ENCODE measurements at regions of chr2 and their contacts with region 1.

Region 1: GRCh38 chr2:227324995-227325838 is at the start of gene MFF:
- DNase-seq: peak; percentile 97
- H3K4me3 Mint-ChIP-seq: peak within 1 kb of the TSS; percentile 90
- H3K27ac Mint-ChIP-seq: peak within 1 kb of the TSS; percentile 89
- H3K4me1 Mint-ChIP-seq: peaks cover 32% of the 10 kb centered on the region
- H3K27me3 Mint-ChIP-seq: no peaks in the 10 kb centered on the region
- total RNA-seq, gene MFF: 73.2 to 74.1 TPM

Region 2: DNA sequence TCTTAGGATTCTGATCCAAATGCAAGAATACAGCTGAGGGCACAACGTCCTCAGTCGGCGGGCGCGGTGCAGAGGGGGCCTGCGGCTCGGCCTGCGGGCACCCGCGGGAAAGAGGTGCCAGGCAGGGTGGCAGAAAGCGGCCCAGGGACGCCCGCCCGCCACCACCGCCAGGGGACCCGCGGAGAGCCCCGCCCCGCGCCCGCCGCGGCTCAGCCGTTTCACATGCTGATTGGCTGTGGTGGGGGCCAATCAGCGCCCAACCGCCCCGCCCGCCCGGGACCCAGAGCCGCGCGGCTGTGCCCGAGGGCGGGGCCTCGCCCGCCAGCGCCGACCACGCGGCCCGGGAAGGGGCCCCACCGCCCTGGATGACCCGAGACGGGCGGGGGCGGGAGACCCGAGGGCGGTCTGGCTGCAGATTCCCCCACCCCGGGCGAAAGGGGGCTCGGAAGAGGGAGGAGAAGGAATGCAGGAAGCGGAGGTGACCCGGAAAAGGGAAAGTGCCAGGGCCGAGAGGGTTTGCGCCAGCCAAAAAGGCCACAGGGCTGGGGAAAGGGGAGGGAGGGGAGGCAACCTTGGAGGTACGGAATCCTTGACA is 533.6 kb before region 1 on chr2:
- CTCF ChIA-PET with region 1: no interaction called
- POLR2A ChIA-PET with region 1: no interaction called
- intact Hi-C with region 1: loop called (anchors 5 kb)
- DNase-seq: peak; percentile 94
- H3K4me3 Mint-ChIP-seq: peak overlapping the region; percentile 80
- H3K27ac Mint-ChIP-seq: peak overlapping the region; percentile 92
- H3K4me1 Mint-ChIP-seq: peaks cover 29% of the 10 kb centered on the region
- H3K27me3 Mint-ChIP-seq: no peaks in the 10 kb centered on the region

Region 3: DNA sequence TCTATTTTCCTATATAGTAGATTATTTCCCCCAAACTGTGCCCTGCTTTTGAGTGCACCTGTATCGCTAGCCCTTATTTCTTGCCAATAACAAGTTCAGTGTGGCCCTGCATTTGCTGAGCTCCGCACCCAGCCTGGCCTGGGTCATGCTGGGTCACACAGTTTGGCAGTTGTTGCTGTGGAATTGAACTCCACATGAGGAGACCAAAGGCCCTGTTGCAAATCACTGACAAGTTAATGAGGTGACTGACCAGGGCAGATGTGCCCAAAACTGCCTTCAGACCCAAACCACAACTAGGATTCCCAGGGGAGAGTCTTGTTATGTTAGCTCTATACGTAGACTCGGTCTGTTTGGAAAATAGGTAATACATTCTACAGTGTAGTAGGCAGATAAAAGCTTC is 192.2 kb before region 1 on chr2:
- CTCF ChIA-PET with region 1: no interaction called
- POLR2A ChIA-PET with region 1: no interaction called
- intact Hi-C with region 1: loop called (anchors 5 kb)
- DNase-seq: no peak
- H3K4me3 Mint-ChIP-seq: no peak overlapping the region
- H3K27ac Mint-ChIP-seq: no peak overlapping the region
- H3K4me1 Mint-ChIP-seq: no peaks in the 10 kb centered on the region
- H3K27me3 Mint-ChIP-seq: peaks cover 5% of the 10 kb centered on the region

Region 4: DNA sequence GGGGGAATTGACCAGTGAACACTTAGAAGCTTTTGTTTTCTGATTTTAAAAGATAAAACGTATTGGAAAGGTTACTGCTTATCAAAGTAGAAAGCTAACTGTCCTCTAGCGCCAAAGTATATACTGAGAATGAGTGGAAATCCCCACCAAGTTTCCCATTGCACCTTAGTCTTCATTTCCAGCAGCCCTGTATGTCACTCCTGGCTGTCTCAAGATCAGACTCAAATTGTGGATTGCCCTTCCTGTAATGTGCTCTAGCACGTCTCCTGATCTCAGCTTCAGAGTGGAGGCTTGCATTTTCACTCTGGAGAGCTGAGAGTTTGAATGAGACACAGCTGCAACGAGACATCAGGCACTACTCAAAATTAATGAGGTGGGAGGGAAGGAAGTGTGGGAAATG is 26.4 kb after region 1 on chr2:
- CTCF ChIA-PET with region 1: no interaction called
- POLR2A ChIA-PET with region 1: no interaction called
- intact Hi-C with region 1: loop called (anchors 1 kb)
- DNase-seq: no peak
- H3K4me3 Mint-ChIP-seq: no peak overlapping the region
- H3K27ac Mint-ChIP-seq: peak overlapping the region; percentile 38
- H3K4me1 Mint-ChIP-seq: peaks cover 14% of the 10 kb centered on the region
- H3K27me3 Mint-ChIP-seq: no peaks in the 10 kb centered on the region

Region 5: DNA sequence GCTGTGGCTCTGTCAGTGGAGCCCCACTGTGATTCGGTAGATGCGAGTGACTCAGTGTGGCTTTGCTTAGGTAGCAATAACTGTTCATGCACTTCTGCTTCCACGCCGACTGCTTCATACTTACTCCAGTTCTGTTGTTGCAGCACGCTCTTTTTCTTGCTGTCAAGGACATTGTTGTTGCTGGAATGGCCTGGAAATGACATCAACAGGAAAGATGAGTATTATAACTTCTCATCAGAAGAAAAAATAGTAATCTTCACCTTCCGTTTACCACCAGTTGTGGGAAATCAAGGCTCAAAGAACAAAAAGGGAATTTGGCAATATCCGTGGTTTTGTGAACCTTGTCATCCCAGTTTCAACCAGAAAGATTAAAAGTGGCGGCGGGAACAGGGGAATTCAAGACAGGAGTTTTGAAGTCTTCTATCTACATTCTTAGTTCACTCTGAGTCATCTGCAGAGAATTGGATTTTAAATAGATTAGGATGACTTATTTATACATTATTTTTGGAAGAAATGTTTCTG is 45.6 kb after region 1 on chr2:
- CTCF ChIA-PET with region 1: no interaction called
- POLR2A ChIA-PET with region 1: no interaction called
- intact Hi-C with region 1: loop called (anchors 5 kb)
- DNase-seq: peak; percentile 37
- H3K4me3 Mint-ChIP-seq: no peak overlapping the region
- H3K27ac Mint-ChIP-seq: no peak overlapping the region
- H3K4me1 Mint-ChIP-seq: peaks cover 8% of the 10 kb centered on the region
- H3K27me3 Mint-ChIP-seq: no peaks in the 10 kb centered on the region

Region 6: DNA sequence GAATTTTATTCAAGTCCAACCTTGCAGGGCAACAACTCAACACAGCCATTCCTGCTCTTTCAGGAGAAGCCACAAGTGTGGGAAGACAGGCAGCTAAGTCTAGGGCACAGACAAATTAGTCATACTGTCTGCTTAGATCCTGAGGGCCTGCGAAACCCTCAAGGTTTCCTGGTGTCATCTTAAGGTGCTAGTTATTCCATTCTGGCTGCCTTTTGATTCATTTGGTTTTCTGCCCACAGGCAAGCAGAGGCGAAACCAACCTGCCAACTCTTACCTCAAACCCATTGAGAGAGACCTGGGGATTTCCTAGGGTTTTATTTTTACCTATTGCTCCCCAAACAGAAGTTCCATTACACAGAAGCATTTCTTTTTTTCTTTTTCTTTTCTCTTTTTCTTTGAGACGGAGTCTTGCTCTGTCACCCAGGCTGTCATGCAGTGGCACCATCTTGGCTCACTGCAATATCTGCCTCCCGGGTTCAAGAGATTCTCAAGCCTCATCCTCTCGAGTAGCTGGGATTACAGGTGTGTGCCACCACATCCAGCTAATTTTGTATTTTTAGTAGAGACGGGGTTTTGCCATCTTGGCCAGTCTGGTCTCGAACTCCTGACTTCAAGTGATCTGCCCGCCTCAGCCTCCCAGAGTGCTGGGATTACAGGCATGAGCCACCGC is 86.2 kb after region 1 on chr2:
- CTCF ChIA-PET with region 1: no interaction called
- POLR2A ChIA-PET with region 1: no interaction called
- intact Hi-C with region 1: loop called (anchors 5 kb)
- DNase-seq: peak; percentile 81
- H3K4me3 Mint-ChIP-seq: peak overlapping the region; percentile 11
- H3K27ac Mint-ChIP-seq: peak overlapping the region; percentile 89
- H3K4me1 Mint-ChIP-seq: peaks cover 57% of the 10 kb centered on the region
- H3K27me3 Mint-ChIP-seq: no peaks in the 10 kb centered on the region

Measured in activated CD4-positive, alpha-beta memory T cell treated with anti-CD3 and anti-CD28 coated beads for 36 hours (primary cell).